ENCODE measurements at regions of chr12 and their contacts with region 1.

Region 1: GRCh38 chr12:120194534-120195395 is at the start of gene GCN1:
- DNase-seq: peak; percentile 84
- H3K4me3 Mint-ChIP-seq: peak within 1 kb of the TSS; percentile 92
- H3K27ac Mint-ChIP-seq: peak within 1 kb of the TSS; percentile 98
- H3K4me1 Mint-ChIP-seq: peaks cover 39% of the 10 kb centered on the region
- H3K27me3 Mint-ChIP-seq: no peaks in the 10 kb centered on the region
- total RNA-seq, gene GCN1: 165 and 176 TPM in 2 replicates

Region 2: GRCh38 chr12:119988782-119989668 is 205.7 kb before region 1 on chr12 and contains the start of gene BICDL1:
- intact Hi-C with region 1: loop called (anchors 10 kb)
- DNase-seq: peak; percentile 97
- H3K4me3 Mint-ChIP-seq: peak within 1 kb of the TSS; percentile 94
- H3K27ac Mint-ChIP-seq: peak within 1 kb of the TSS; percentile 91
- H3K4me1 Mint-ChIP-seq: peaks cover 44% of the 10 kb centered on the region
- H3K27me3 Mint-ChIP-seq: peaks cover 1% of the 10 kb centered on the region
- total RNA-seq, gene BICDL1: 127 and 130 TPM in 2 replicates

Region 3: DNA sequence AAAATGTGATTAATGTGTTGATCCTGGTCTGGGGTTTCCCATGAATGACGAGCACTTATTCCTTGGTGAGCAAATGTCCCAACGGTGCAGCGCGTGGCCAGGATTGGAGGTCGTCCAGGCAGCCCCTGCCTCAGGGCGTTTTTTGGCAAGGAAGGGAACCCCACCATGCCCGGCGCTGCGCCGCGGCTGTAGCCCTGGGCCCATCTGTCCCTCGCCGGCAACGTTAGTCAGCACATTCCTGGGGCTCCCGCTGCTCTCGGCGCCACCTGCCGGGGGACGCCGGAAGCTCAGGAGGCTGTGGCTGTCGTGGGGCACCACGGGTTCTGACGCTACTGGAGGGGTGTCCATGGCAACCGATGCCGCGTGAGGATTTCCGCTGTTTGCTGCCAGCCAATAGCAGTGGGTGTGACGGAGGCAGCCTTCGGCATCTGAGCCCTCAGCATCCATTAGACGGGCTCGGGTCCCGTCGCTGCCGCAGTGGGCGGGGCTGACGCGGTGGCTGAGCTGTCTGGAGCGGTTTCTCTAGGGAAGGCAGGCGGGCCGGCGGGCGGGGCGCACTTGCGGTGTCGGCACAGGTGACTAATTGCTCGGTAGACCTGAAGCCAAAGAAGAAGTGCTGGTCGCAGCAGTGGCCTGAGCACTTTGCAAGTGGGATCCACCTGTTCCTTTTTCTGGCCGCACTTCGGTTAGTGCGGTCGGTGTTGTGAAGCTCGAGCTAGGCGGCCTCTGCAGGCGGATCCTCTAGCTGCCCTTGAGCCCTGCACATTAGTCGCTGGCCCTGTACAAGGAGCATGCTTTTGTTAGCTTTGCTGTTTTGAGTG is 107.8 kb before region 1 on chr12:
- intact Hi-C with region 1: loop called (anchors 2 kb)
- DNase-seq: peak; percentile 100
- H3K4me3 Mint-ChIP-seq: peak overlapping the region; percentile 74
- H3K27ac Mint-ChIP-seq: peak overlapping the region; percentile 88
- H3K4me1 Mint-ChIP-seq: peaks cover 28% of the 10 kb centered on the region
- H3K27me3 Mint-ChIP-seq: no peaks in the 10 kb centered on the region

Region 4: DNA sequence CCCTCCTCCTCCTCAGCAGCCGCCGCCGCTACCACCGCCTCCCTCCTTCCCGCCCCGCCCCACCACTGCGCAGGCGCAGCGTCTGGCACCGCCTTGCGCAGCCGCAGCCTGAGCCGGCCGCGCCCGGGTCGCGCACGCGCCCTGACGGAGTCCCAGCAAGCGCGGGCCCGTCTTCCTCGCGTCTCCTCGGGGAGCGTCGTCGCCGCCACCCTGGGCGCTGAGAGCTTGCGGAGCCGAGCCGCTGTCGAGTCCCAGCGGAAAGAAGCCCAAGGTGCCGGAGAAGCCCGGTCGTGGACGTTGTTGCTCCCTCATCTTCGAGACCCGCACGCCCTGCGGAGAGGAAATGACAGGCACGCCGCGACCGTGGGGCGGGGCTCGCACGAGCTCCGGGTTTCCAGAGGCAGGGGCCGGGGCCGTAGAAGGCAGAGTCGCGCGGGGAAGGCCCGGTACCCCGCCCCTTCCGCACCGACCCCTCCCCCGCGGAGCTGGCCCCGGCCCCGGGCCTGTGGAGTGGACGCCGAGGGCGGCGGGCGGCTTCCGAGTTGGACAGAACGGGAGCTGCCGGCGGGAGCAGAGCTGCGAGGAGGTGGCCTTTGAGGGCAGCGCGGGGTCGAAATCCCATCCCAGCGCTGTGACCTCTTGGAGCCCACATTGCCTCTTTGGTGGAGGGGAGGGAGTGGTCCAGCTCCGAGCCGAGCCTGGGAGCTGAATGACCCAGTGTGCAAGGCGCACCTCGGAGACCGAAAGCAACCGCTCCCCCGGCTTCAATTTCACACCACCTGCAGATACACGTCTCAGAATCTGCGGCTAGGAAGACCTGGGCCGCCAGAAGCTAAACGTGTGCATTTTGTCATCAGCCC is 77.7 kb before region 1 on chr12:
- intact Hi-C with region 1: loop called (anchors 2 kb)
- DNase-seq: peak; percentile 97
- H3K4me3 Mint-ChIP-seq: peak overlapping the region; percentile 86
- H3K27ac Mint-ChIP-seq: peak overlapping the region; percentile 83
- H3K4me1 Mint-ChIP-seq: peaks cover 67% of the 10 kb centered on the region
- H3K27me3 Mint-ChIP-seq: no peaks in the 10 kb centered on the region

Region 5: GRCh38 chr12:120265473-120266179 is 70.9 kb after region 1 on chr12 and contains the start of gene PXN:
- intact Hi-C with region 1: loop called (anchors 2 kb)
- DNase-seq: peak; percentile 85
- H3K4me3 Mint-ChIP-seq: peak within 1 kb of the TSS; percentile 90
- H3K27ac Mint-ChIP-seq: peak within 1 kb of the TSS; percentile 85
- H3K4me1 Mint-ChIP-seq: peaks cover 43% of the 10 kb centered on the region
- H3K27me3 Mint-ChIP-seq: no peaks in the 10 kb centered on the region
- total RNA-seq, gene PXN: 44.4 and 45.4 TPM in 2 replicates

Region 6: DNA sequence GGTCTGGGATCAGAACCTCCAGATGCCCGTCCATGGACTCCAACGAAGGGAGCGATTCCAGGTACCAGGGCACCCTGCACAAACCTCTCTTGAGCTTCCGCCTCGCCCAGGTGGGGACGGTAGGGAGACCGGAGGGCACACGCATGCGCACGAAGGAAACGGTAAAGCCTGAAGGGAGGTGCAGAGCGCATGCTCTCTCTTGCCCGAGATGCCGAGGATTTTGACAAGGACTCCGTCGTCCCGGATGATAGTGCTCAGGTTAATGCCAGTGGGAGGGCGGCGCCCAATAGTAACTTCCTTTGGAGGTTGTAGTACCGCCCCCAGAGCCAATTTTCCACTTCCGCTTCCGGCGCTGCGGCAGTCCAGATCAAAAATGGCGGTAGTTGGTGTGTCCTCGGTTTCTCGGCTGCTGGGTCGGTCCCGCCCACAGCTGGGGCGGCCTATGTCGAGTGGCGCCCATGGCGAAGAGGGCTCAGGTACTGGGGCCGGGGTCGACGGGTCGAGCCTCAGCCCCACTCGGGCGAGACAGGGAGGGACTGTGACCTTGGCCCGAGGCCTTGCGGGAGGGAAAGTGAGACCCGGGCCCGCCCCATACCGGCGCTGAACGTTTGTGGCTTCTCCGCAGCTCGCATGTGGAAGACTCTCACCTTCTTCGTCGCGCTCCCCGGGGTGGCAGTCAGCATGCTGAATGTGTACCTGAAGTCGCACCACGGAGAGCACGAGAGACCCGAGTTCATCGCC is 243.2 kb after region 1 on chr12 and contains the start of gene COX6A1:
- intact Hi-C with region 1: loop called (anchors 2 kb)
- DNase-seq: peak; percentile 98
- H3K4me3 Mint-ChIP-seq: peak within 1 kb of the TSS; percentile 98
- H3K27ac Mint-ChIP-seq: peak within 1 kb of the TSS; percentile 94
- H3K4me1 Mint-ChIP-seq: peaks cover 17% of the 10 kb centered on the region
- H3K27me3 Mint-ChIP-seq: no peaks in the 10 kb centered on the region
- total RNA-seq, gene COX6A1: 328 and 333 TPM in 2 replicates

Region 7: DNA sequence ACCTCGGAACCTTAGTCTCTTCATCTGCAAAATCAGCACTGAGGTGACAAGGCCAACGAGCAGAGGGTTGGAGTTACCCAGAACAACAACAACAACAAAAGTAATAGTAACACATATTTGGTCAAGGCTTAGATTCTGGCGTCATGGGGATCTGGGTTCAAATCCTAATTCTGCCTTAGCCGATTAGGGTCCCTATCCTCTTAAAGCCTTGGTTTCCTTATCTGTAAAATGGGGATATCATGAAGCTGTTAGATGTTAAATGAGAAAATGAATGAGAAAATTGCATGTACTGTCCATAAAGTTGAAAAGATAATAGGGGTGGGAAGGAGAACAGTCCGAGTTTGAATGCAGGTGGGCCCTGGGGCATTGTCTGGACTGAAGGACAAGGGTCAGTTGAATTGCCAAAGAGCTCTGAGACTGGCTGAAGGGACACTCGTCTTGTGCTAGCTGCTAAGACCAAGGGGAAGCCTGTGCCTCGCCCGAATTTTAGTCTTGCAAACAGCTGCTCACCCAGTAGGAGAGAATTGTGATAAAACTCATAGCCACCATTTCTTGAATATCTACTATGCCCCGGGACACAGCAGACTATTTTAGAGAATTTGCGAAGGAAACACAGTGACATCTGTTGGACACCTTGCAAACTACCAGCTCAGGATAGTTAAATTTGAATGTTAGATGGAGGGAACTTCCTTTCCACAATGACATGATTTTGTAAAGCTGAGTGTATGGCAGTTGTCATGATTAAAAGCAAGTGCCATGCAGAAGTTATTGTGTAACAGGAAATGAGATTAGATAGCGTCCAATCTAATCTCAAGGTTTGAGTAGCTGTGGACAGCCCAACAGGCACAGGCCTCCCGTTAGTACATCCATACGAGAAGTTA is 776.8 kb after region 1 on chr12:
- intact Hi-C with region 1: no loop called
- DNase-seq: peak; percentile 24
- H3K4me3 Mint-ChIP-seq: no peak overlapping the region
- H3K27ac Mint-ChIP-seq: no peak overlapping the region
- H3K4me1 Mint-ChIP-seq: peaks cover 5% of the 10 kb centered on the region
- H3K27me3 Mint-ChIP-seq: no peaks in the 10 kb centered on the region

Measured in activated T-helper 2 cell treated with anti-CD3 and anti-CD28 coated beads, Interferon-gamma antibody, Interleukin-2, Interleukin-4, amounts not matched to agents 10 μg/mL and 5 μg/mL and 100 μg/mL, durations not matched to agents 14 hours and 24 hours and 36 hours (primary cell).